SK-N-SH (cell line): ENCODE measurements at regions of chr20 and their contacts with region 1.

Region 1: GRCh38 chr20:45450097-45450818 is 19.3 kb upstream of the WFDC2 start:
- DNase-seq: peak; percentile 41
- H3K4me3 ChIP-seq: no peak overlapping the region
- H3K27ac ChIP-seq: no peak overlapping the region
- H3K4me1 ChIP-seq: no peaks in the 10 kb centered on the region
- H3K27me3 ChIP-seq: peaks cover 17% of the 10 kb centered on the region; the same call in 1 of the 2 replicates
- CTCF ChIP-seq: peak; percentile 71
- EP300 ChIP-seq: no peak
- RAD21 ChIP-seq: peak; percentile 63

Region 2: DNA sequence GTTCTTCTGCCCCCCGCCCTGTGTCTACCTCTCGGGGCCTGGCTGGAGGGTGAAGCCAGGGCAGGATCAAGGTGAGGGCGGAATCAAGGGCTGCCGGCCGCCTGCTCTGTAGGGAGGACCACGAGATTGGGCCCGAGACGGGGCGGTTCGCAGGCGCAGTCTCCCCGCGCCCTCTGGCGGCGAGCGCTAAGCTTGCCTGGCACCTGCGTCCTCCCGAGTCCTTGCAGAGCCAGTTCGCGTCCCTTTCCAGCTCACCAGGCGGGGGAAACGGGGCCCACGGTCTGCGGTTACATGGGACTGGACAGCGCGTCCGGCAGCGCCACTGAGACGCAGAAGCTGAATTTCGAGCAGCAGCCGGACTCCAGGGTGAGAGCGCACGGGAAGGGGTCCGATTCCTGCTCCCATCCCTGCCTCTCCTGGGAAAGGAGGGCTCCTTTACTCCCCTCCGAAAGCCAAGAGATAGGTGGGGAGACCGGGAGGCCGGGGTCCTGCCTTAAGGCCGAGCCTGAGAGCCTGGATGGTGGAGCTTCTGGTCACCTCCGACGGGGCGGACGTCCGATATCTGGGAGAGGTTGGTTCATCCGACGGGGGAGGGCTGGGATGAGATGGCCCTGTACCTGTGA is 138.6 kb before region 1 on chr20:
- CTCF ChIA-PET with region 1: interaction called, 11 read pairs
- POLR2A ChIA-PET with region 1: no interaction called
- DNase-seq: peak; percentile 75
- H3K4me3 ChIP-seq: no peak overlapping the region
- H3K27ac ChIP-seq: no peak overlapping the region
- H3K4me1 ChIP-seq: no peaks in the 10 kb centered on the region
- H3K27me3 ChIP-seq: peaks cover 8% of the 10 kb centered on the region; the same call in 1 of the 2 replicates
- CTCF ChIP-seq: peak; percentile 48
- EP300 ChIP-seq: no peak
- RAD21 ChIP-seq: peak; percentile 37

Region 3: DNA sequence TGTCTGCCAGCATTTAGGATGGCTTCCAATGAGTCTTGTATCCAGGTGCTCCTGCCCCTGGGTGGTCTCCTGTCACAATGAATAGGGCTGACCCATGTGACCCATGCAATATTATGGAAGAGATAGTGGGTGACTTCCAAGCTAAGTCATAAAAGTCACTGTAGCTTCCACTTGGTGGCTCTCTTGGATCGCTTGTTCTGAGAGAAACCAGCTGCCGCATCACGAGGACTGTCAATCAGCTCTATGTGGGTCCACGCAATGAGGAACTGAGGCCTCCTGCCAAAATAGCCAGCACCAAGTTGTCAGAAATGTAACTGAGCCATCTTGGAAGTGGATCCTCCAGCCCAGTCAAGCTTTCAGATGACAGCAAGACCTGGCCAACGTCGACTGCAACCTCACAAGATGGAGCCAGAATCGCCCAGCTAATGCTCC is 127.3 kb before region 1 on chr20:
- CTCF ChIA-PET with region 1: interaction called, 56 read pairs
- POLR2A ChIA-PET with region 1: no interaction called
- DNase-seq: no peak
- H3K4me3 ChIP-seq: no peak overlapping the region
- H3K27ac ChIP-seq: no peak overlapping the region
- H3K4me1 ChIP-seq: peaks cover 0 to 8% of the 10 kb centered on the region in 2 experiments; a peak in 1 of 4 replicates
- H3K27me3 ChIP-seq: no peaks in the 10 kb centered on the region
- CTCF ChIP-seq: peak; percentile 31; the same call in 1 of the 2 replicates
- EP300 ChIP-seq: no peak
- RAD21 ChIP-seq: peak; percentile 65

Region 4: GRCh38 chr20:45427236-45428149 is 22.8 kb before region 1 on chr20:
- CTCF ChIA-PET with region 1: interaction called, 14 read pairs
- POLR2A ChIA-PET with region 1: no interaction called
- DNase-seq: peak; percentile 80
- H3K4me3 ChIP-seq: no peak overlapping the region
- H3K27ac ChIP-seq: peak overlapping the region in 1 of 2 experiments; percentile 64; a peak in 2 of 4 replicates
- H3K4me1 ChIP-seq: peaks cover 0 to 20% of the 10 kb centered on the region in 2 experiments; a peak in 1 of 4 replicates
- H3K27me3 ChIP-seq: no peaks in the 10 kb centered on the region
- CTCF ChIP-seq: no peak
- EP300 ChIP-seq: peak in 1 of 2 experiments; percentile 86; a peak in 2 of 4 replicates
- RAD21 ChIP-seq: no peak

Region 5: GRCh38 chr20:45465491-45466266 is 15.4 kb after region 1 on chr20:
- CTCF ChIA-PET with region 1: interaction called, 15 read pairs
- POLR2A ChIA-PET with region 1: no interaction called
- DNase-seq: no peak
- H3K4me3 ChIP-seq: no peak overlapping the region
- H3K27ac ChIP-seq: no peak overlapping the region
- H3K4me1 ChIP-seq: peaks cover 0 to 2% of the 10 kb centered on the region in 2 experiments; a peak in 1 of 4 replicates
- H3K27me3 ChIP-seq: peaks cover 50% of the 10 kb centered on the region; the same call in 1 of the 2 replicates
- CTCF ChIP-seq: no peak
- EP300 ChIP-seq: no peak
- RAD21 ChIP-seq: no peak